ENCODE measurements at regions of chr10 and their contacts with region 1.

Region 1: GRCh38 chr10:107418407-107418806 is 253.9 kb upstream of the SORCS1 start:
- DNase-seq: no peak
- H3K4me3 Mint-ChIP-seq: no peak overlapping the region
- H3K27ac Mint-ChIP-seq: no peak overlapping the region
- H3K4me1 Mint-ChIP-seq: no peaks in the 10 kb centered on the region
- H3K27me3 Mint-ChIP-seq: no peaks in the 10 kb centered on the region
- CTCF ChIP-seq: no peak

Region 2: DNA sequence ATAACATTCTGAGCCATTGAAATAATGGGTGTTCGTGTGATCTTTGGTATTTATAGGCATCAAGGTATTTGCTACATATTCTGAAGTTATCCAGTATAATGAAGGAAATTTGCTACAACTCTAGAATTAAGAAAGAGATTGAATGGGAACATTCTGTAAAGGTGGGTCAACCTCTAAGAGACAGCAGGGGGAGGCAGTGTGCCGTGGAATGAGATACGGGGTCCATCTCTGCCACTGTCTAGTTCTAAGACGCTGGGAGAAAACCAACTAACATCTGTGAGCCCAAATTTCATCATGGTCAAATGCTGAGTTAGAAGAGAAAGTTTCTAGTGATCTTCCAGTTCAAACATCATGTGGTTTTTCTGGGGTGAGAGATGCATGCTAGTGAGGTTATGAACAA is 622.8 kb before region 1 on chr10:
- CTCF ChIA-PET with region 1: no interaction called
- POLR2A ChIA-PET with region 1: no interaction called
- intact Hi-C with region 1: no loop called
- DNase-seq: peak; percentile 64
- H3K4me3 Mint-ChIP-seq: no peak overlapping the region
- H3K27ac Mint-ChIP-seq: no peak overlapping the region
- H3K4me1 Mint-ChIP-seq: peaks cover 6% of the 10 kb centered on the region
- H3K27me3 Mint-ChIP-seq: no peaks in the 10 kb centered on the region
- CTCF ChIP-seq: peak; percentile 52

Region 3: GRCh38 chr10:107546287-107546686 is 127.9 kb after region 1 on chr10:
- CTCF ChIA-PET with region 1: no interaction called
- POLR2A ChIA-PET with region 1: no interaction called
- intact Hi-C with region 1: loop called (anchors 10 kb)
- DNase-seq: peak; percentile 89
- H3K4me3 Mint-ChIP-seq: peak overlapping the region; percentile 58
- H3K27ac Mint-ChIP-seq: peak overlapping the region; percentile 84
- H3K4me1 Mint-ChIP-seq: peaks cover 18% of the 10 kb centered on the region
- H3K27me3 Mint-ChIP-seq: no peaks in the 10 kb centered on the region
- CTCF ChIP-seq: no peak